ENCODE measurements at regions of chr10 and their contacts with region 1.

Region 1: GRCh38 chr10:89369156-89370105 is 8.4 kb upstream of the IFIT1B start:
- DNase-seq: peak in 1 of 2 donors; percentile 55
- ATAC-seq: no peak
- H3K4me3 ChIP-seq: no peak overlapping the region
- H3K4me3 Mint-ChIP-seq: no peak overlapping the region
- H3K27ac ChIP-seq: no peak overlapping the region
- H3K27ac Mint-ChIP-seq: peak overlapping the region in 1 of 2 donors; percentile 54
- H3K4me1 ChIP-seq: peaks cover 9% of the 10 kb centered on the region
- H3K4me1 Mint-ChIP-seq: peaks cover 23 to 25% of the 10 kb centered on the region in 2 donors
- H3K27me3 ChIP-seq: no peaks in the 10 kb centered on the region
- H3K27me3 Mint-ChIP-seq: peaks cover 0 to 18% of the 10 kb centered on the region in 2 donors
- CTCF ChIP-seq: peak; percentile 54

Region 2: GRCh38 chr10:89296220-89296648 is 73.2 kb before region 1 on chr10:
- intact Hi-C with region 1: loop called (anchors 1 kb)
- DNase-seq: no peak
- ATAC-seq: no peak
- H3K4me3 ChIP-seq: no peak overlapping the region
- H3K4me3 Mint-ChIP-seq: no peak overlapping the region
- H3K27ac ChIP-seq: no peak overlapping the region
- H3K27ac Mint-ChIP-seq: peak overlapping the region in 1 of 2 donors; percentile 37
- H3K4me1 ChIP-seq: peaks cover 22% of the 10 kb centered on the region
- H3K4me1 Mint-ChIP-seq: peaks cover 28 to 31% of the 10 kb centered on the region in 2 donors
- H3K27me3 ChIP-seq: no peaks in the 10 kb centered on the region
- H3K27me3 Mint-ChIP-seq: peaks cover 0 to 2% of the 10 kb centered on the region in 2 donors
- CTCF ChIP-seq: no peak

Region 3: DNA sequence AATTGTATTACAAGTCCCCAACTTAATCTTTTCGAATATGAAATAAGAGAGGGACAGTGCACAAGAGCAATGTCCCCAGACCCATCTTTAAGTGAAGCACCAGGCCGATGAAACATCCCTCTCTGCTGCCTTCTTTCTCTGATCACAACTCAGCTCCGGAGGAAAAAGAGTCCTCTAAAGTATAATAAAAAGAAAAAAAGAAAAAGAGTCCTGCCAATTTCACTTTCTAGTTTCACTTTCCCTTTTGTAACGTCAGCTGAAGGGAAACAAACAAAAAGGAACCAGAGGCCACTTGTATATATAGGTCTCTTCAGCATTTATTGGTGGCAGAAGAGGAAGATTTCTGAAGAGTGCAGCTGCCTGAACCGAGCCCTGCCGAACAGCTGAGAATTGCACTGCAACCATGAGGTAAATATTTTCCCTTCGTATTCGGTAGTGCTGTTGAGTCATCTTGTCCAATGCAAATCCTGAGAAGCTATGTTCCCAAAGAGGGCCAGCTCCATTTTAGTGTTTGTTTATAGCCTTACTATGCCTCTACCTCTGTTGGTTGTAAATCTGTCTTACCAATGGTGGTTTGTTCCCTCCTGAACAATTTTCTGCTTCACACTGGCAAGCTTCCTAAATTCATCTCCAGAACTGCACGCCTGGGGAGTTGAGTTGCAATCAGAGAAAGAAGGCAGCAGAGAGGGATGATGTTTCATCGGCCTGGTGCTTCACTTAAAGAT is 67.5 kb before region 1 on chr10 and contains the start of gene IFIT2:
- intact Hi-C with region 1: loop called (anchors 2 kb)
- DNase-seq: peak in 1 of 2 donors; percentile 79
- ATAC-seq: peak; percentile 70 to 75 (median 75)
- H3K4me3 ChIP-seq: peak within 1 kb of the TSS; percentile 75
- H3K4me3 Mint-ChIP-seq: peak within 1 kb of the TSS; percentile 95
- H3K27ac ChIP-seq: peak within 1 kb of the TSS; percentile 89
- H3K27ac Mint-ChIP-seq: peak within 1 kb of the TSS; percentile 95 to 98
- H3K4me1 ChIP-seq: peaks cover 34% of the 10 kb centered on the region
- H3K4me1 Mint-ChIP-seq: peaks cover 51 to 59% of the 10 kb centered on the region in 2 donors
- H3K27me3 ChIP-seq: no peaks in the 10 kb centered on the region
- H3K27me3 Mint-ChIP-seq: no peaks in the 10 kb centered on the region
- CTCF ChIP-seq: no peak
- total RNA-seq, gene IFIT2: 21.8 to 103 (median 34.9) TPM

Region 4: GRCh38 chr10:89391917-89392756 is 22.7 kb after region 1 on chr10 and contains the start of gene IFIT1:
- intact Hi-C with region 1: loop called (anchors 1 kb)
- DNase-seq: peak in 1 of 2 donors; percentile 89
- ATAC-seq: peak; percentile 92 to 94 (median 94)
- H3K4me3 ChIP-seq: peak within 1 kb of the TSS; percentile 56
- H3K4me3 Mint-ChIP-seq: peak within 1 kb of the TSS; percentile 96
- H3K27ac ChIP-seq: peak within 1 kb of the TSS; percentile 73
- H3K27ac Mint-ChIP-seq: peak within 1 kb of the TSS; percentile 89 to 93
- H3K4me1 ChIP-seq: peaks cover 8% of the 10 kb centered on the region
- H3K4me1 Mint-ChIP-seq: peaks cover 21 to 22% of the 10 kb centered on the region in 2 donors
- H3K27me3 ChIP-seq: no peaks in the 10 kb centered on the region
- H3K27me3 Mint-ChIP-seq: no peaks in the 10 kb centered on the region
- CTCF ChIP-seq: no peak
- total RNA-seq, gene IFIT1: 1.0 to 4.9 (median 2.7) TPM

Region 5: DNA sequence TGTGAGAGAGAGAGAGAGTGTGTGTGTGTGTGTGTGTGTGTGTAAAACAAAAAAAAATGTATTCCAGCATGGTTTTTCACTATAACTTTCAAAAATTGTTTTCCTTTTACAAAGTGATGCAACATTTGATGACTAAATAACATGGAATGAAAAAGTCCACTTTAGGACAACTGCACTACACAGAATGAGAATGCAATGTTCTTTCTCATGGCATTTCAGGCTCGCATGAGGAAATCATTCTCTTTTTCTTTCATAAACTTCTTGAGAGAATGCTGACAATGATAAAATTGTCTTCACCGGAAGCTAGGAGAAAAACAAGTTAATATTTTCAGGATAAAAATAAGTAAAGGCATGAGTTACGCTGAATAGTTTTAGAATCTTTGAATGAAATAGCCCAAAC is 112.2 kb after region 1 on chr10:
- intact Hi-C with region 1: no loop called
- DNase-seq: no peak
- ATAC-seq: no peak
- H3K4me3 ChIP-seq: no peak overlapping the region
- H3K4me3 Mint-ChIP-seq: no peak overlapping the region
- H3K27ac ChIP-seq: no peak overlapping the region
- H3K27ac Mint-ChIP-seq: no peak overlapping the region
- H3K4me1 ChIP-seq: no peaks in the 10 kb centered on the region
- H3K4me1 Mint-ChIP-seq: no peaks in the 10 kb centered on the region
- H3K27me3 ChIP-seq: peaks cover 5% of the 10 kb centered on the region
- H3K27me3 Mint-ChIP-seq: peaks cover 12 to 52% of the 10 kb centered on the region in 2 donors
- CTCF ChIP-seq: no peak